B cell (primary cell): ENCODE measurements at regions of chr12 and their contacts with region 1.

Region 1: GRCh38 chr12:100266835-100267618 is at the starts of genes DEPDC4 and SCYL2:
- DNase-seq: peak; percentile 98
- ATAC-seq: peak; percentile 93
- H3K4me3 ChIP-seq: peak within 1 kb of the TSS; percentile 81 to 95 (median 89)
- H3K4me3 Mint-ChIP-seq: peak within 1 kb of the TSS; percentile 99
- H3K27ac ChIP-seq: peak within 1 kb of the TSS; percentile 92 to 93
- H3K27ac Mint-ChIP-seq: peak within 1 kb of the TSS; percentile 94
- H3K4me1 ChIP-seq: peaks cover 22 to 23% of the 10 kb centered on the region in 2 donors
- H3K4me1 Mint-ChIP-seq: peaks cover 37% of the 10 kb centered on the region
- H3K27me3 ChIP-seq: no peaks in the 10 kb centered on the region
- H3K27me3 Mint-ChIP-seq: no peaks in the 10 kb centered on the region
- CTCF ChIP-seq: no peak
- total RNA-seq, gene DEPDC4: 0.36 and 1.2 TPM in 2 replicates
- total RNA-seq, gene SCYL2: 38.4 and 39.0 TPM in 2 replicates

Region 2: DNA sequence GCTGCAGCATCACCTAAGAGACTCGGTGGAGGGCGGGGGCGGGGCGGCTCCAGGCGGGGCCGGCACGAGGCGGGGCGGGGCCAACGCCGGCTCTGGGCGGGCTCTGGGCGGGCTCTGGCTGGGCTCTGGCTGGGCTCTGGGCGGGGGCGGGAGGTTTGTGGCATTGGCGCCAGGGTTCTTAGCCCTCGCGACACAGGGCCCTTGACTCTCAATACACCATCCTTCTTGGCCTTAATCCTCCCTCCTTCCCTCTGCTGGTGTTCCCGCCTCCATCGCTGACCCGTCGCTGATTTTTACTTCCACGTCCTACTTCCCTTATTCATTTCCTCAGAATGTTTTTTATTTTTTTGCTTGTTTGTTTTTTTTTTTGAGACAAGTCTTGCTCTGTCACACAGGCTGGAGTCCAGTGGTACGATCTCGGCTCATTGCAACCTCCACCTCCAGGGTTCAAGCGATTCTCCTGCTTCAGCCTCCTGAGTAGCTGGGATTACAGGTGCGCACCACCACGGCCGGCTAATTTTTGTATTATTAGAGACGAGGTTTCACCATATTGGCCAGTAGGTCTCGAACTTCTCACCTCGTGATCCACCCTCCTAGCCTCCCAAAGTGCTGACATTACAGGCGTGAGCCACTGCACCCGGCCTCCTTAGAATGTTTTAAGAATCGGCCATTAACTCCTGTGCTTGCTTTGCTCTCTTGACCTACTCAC is 124.0 kb before region 1 on chr12 and contains the start of gene BLTP3B:
- CTCF ChIA-PET with region 1: no interaction called
- POLR2A ChIA-PET with region 1: no interaction called
- intact Hi-C with region 1: loop called (anchors 1 kb)
- DNase-seq: peak; percentile 91
- ATAC-seq: peak; percentile 95
- H3K4me3 ChIP-seq: peak within 1 kb of the TSS; percentile 67 to 97 (median 93)
- H3K4me3 Mint-ChIP-seq: peak within 1 kb of the TSS; percentile 99
- H3K27ac ChIP-seq: peak within 1 kb of the TSS; percentile 92 to 95
- H3K27ac Mint-ChIP-seq: peak within 1 kb of the TSS; percentile 98
- H3K4me1 ChIP-seq: peaks cover 27 to 30% of the 10 kb centered on the region in 2 donors
- H3K4me1 Mint-ChIP-seq: peaks cover 41% of the 10 kb centered on the region
- H3K27me3 ChIP-seq: no peaks in the 10 kb centered on the region
- H3K27me3 Mint-ChIP-seq: no peaks in the 10 kb centered on the region
- CTCF ChIP-seq: no peak
- total RNA-seq, gene BLTP3B: 27.4 and 30.2 TPM in 2 replicates

Region 3: DNA sequence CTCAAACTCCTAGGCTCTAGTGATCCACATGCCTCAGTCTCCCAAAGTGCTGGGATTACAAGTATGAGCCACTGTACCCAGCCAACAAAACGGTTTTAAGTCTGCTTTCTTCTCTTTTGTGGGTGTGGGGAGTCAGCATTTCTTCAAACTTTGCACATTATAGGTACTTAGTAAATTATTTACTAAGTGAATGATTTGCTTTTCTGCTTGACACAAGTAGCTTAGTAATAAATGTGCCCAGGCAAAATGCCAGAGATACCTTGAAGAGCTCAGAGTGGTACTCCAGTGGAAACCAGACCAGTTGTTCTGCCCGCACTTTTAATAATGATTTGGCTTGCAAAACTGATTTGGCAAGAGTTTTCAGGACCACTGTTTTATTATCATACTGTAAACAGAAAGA is 15.1 kb before region 1 on chr12:
- CTCF ChIA-PET with region 1: no interaction called
- POLR2A ChIA-PET with region 1: no interaction called
- intact Hi-C with region 1: no loop called
- DNase-seq: no peak
- ATAC-seq: no peak
- H3K4me3 ChIP-seq: no peak overlapping the region
- H3K4me3 Mint-ChIP-seq: no peak overlapping the region
- H3K27ac ChIP-seq: no peak overlapping the region
- H3K27ac Mint-ChIP-seq: no peak overlapping the region
- H3K4me1 ChIP-seq: no peaks in the 10 kb centered on the region
- H3K4me1 Mint-ChIP-seq: no peaks in the 10 kb centered on the region
- H3K27me3 ChIP-seq: no peaks in the 10 kb centered on the region
- H3K27me3 Mint-ChIP-seq: no peaks in the 10 kb centered on the region
- CTCF ChIP-seq: no peak

Region 4: DNA sequence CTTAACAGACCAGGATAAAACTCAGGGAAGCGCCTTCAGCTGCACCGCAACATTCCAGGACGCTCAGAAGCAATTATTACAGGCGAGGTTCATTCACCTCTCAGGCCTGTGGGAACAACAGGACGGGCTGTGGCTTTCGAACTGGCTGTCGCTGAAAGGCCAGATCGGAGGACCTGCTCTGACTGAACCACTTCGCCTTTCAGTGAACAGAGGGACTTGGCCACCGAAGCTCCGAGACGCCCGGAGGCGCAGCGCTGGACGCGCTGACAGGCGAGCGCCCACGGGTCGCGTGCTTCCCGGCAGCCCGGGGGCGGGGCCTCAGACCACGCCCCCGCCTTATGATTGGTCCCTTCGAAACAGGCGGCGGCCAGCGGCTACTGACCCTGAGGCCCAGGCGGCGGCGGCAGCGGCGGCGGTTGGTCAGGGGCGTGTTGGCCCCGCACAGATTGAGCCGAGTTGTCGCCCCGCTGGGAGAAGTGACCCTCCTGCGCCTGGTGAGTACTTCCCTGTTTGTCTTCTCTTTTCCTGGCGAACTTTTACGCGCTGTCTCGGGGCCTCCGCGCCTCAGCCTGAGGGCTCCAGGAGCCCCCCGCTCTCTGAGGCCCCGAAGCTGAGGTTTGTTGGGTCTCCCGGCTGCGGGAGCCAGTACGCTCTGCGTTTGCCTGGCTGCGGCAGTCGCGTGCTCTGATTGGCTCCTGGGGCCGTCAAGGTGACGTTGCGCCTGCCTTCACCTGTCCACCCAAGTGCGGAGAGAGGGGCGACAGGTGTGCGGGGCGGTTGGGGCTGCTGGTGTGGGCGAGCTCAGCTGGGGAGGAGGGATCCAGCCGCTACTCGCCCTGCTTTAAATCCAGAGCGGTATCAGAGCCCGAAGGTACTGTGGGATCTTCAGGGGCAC is 306.5 kb after region 1 on chr12 and contains the start of gene GAS2L3:
- CTCF ChIA-PET with region 1: no interaction called
- POLR2A ChIA-PET with region 1: no interaction called
- intact Hi-C with region 1: loop called (anchors 5 kb)
- DNase-seq: peak; percentile 70
- ATAC-seq: peak; percentile 95
- H3K4me3 ChIP-seq: peak within 1 kb of the TSS; percentile 32 to 80 (median 66)
- H3K4me3 Mint-ChIP-seq: peak within 1 kb of the TSS; percentile 90
- H3K27ac ChIP-seq: peak within 1 kb of the TSS in 1 of 2 donors; percentile 52
- H3K27ac Mint-ChIP-seq: no peak within 1 kb of the TSS
- H3K4me1 ChIP-seq: peaks cover 12 to 14% of the 10 kb centered on the region in 2 donors
- H3K4me1 Mint-ChIP-seq: peaks cover 14% of the 10 kb centered on the region
- H3K27me3 ChIP-seq: peaks cover 0 to 12% (median 0%) of the 10 kb centered on the region in 4 experiments
- H3K27me3 Mint-ChIP-seq: peaks cover 16% of the 10 kb centered on the region
- CTCF ChIP-seq: no peak
- total RNA-seq, gene GAS2L3: 0.10 and 0.29 TPM in 2 replicates

Region 5: GRCh38 chr12:101280006-101280505 is 1013.0 kb after region 1 on chr12 and contains the start of gene UTP20:
- CTCF ChIA-PET with region 1: no interaction called
- POLR2A ChIA-PET with region 1: no interaction called
- intact Hi-C with region 1: loop called (anchors 5 kb)
- DNase-seq: peak; percentile 94
- ATAC-seq: peak; percentile 100
- H3K4me3 ChIP-seq: peak within 1 kb of the TSS; percentile 69 to 100 (median 100)
- H3K4me3 Mint-ChIP-seq: peak within 1 kb of the TSS; percentile 97
- H3K27ac ChIP-seq: peak within 1 kb of the TSS; percentile 48 to 60
- H3K27ac Mint-ChIP-seq: peak within 1 kb of the TSS; percentile 93
- H3K4me1 ChIP-seq: peaks cover 4 to 11% of the 10 kb centered on the region in 2 donors
- H3K4me1 Mint-ChIP-seq: peaks cover 13% of the 10 kb centered on the region
- H3K27me3 ChIP-seq: peaks cover 0 to 10% (median 1%) of the 10 kb centered on the region in 4 experiments
- H3K27me3 Mint-ChIP-seq: peaks cover 17% of the 10 kb centered on the region
- CTCF ChIP-seq: no peak
- total RNA-seq, gene UTP20: 19.7 and 22.7 TPM in 2 replicates